Activated T-helper 1 cell treated with anti-CD3 and anti-CD28 coated beads, Interleukin-12 subunit alpha, Interleukin-12 subunit beta, Interleukin-2, Interleukin-4 antibody, amounts not matched to agents 30 ng/mL and 10 ng/mL and 1 ng/mL, durations not matched to agents 14 hours and 24 hours and 36 hours (primary cell): ENCODE measurements at regions of chr5 and their contacts with region 1.

Region 1: DNA sequence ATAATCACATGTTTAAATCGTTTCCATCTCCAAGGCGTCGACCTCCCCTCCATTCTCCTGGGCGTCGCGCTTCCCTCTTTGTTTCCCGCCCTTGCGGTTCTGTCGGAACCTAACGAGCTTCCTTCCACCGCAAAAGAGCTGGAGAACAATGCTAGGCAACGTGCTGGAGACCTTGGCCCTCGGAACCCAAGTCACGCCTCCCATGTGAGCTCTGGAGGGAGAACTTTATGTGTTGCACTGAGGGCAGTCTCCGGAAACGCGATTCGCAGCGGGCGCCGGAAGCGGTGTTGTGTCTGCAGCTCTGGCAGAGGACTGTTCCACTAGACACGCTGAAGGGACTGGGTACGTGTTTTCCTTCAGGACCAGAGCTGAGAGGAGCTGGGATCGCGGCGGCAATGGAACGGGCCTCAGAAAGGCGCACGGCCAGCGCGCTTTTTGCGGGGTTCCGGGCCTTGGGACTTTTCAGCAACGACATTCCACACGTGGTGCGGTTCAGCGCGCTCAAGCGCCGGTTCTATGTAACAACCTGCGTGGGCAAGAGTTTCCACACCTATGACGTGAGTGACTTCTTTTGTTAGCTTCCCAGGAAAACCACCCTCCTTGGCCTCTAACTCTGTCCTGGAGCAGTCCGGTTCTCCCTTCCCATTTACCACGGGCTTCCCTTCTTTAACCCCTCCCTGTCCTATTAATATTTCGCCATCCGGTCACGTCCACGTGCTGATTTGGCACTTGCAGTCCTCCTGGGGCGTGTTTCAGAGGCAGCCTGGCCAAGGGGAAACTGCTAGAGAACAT is at the start of gene WDR36:
- DNase-seq: peak; percentile 83
- H3K4me3 Mint-ChIP-seq: peak within 1 kb of the TSS; percentile 98
- H3K27ac Mint-ChIP-seq: peak within 1 kb of the TSS; percentile 97
- H3K4me1 Mint-ChIP-seq: peaks cover 42% of the 10 kb centered on the region
- H3K27me3 Mint-ChIP-seq: peaks cover 2% of the 10 kb centered on the region
- total RNA-seq, gene WDR36: 82.5 and 85.7 TPM in 2 replicates

Region 2: DNA sequence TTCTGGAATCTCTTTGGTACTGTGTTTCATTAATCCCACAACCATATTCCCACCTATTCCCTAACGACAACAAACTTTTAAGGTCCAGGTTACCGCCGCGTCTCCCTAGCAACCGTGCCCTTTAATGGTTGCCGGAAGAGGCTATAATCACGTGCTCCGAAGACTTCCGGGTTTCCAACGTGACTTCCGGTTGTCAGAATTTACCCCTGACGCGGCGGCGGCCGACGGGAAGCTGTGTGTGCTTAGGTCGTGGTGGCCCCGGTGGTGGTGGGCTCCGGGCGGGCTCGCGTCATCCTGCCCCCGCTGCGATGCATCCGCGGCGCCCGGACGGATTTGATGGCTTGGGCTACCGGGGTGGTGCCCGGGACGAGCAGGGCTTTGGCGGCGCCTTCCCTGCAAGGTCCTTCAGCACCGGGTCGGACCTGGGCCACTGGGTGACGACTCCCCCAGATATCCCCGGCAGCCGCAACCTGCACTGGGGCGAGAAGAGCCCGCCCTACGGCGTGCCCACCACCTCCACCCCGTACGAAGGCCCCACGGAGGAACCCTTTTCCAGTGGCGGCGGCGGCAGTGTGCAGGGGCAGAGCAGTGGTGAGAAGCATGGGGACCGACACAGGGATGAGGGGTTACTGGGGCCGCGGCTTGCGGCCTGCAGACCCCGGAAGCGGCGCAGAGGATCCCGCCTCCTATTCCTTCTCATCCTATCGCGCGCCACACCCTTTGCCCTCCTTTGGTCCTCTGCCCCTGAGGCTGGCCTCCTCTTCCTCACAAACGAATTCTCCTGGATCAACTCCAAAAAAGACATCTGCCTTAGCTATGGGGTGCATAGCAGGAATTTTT is 353.2 kb before region 1 on chr5 and contains the start of gene SLC25A46:
- intact Hi-C with region 1: loop called (anchors 1 kb)
- DNase-seq: peak; percentile 85
- H3K4me3 Mint-ChIP-seq: peak within 1 kb of the TSS; percentile 97
- H3K27ac Mint-ChIP-seq: peak within 1 kb of the TSS; percentile 96
- H3K4me1 Mint-ChIP-seq: peaks cover 39% of the 10 kb centered on the region
- H3K27me3 Mint-ChIP-seq: peaks cover 11% of the 10 kb centered on the region
- total RNA-seq, gene SLC25A46: 54.6 and 55.4 TPM in 2 replicates

Region 3: DNA sequence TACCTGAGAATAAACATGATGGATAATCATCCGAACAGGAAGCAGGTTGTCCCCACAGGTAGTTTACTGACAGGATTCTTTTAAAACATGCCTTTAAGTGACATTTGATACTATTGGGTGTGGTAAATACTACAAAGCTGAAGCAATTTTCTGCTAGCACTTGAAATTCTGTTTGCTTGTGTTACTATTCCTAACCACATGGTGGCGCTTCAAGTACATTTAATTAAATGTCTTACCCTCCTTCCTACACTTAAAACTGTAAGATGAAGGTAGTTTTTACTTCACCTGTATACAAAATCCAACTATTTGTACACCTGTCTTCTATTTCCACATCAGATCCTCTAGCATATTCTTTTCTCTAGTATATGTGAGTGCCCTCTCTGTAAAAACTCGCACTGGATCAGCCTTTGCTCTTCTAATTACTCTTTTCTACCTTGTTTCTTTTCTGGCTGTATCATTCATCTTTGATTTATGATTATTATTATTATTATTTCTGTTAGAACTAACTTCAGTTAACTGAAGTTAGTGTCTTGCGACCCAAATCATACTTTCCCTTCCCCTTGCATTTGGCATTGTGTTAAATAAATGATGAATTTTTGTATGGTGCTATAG is 335.0 kb before region 1 on chr5:
- intact Hi-C with region 1: loop called (anchors 1 kb)
- DNase-seq: peak; percentile 12
- H3K4me3 Mint-ChIP-seq: no peak overlapping the region
- H3K27ac Mint-ChIP-seq: no peak overlapping the region
- H3K4me1 Mint-ChIP-seq: peaks cover 31% of the 10 kb centered on the region
- H3K27me3 Mint-ChIP-seq: no peaks in the 10 kb centered on the region

Region 4: GRCh38 chr5:111061618-111062017 is 30.6 kb before region 1 on chr5:
- intact Hi-C with region 1: no loop called
- DNase-seq: no peak
- H3K4me3 Mint-ChIP-seq: no peak overlapping the region
- H3K27ac Mint-ChIP-seq: no peak overlapping the region
- H3K4me1 Mint-ChIP-seq: no peaks in the 10 kb centered on the region
- H3K27me3 Mint-ChIP-seq: peaks cover 41% of the 10 kb centered on the region

Region 5: DNA sequence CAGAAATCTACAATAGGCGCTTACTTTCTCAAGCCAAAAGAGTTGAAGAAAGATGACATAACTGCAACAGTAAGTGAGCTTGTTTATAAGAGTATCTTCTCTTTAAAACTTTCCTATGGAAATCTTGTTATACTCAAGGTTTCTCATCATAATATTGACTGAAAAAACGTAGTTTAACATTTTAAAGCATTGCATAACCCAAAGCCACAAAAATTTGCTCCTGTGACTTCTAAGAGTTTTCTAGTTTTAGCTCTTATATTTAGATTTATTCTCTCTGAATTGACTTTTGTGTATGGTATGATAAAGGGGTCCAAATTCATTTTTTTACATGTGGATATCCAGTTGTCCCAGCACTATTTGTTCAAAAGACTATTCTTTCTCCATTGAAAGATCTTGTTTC is 15.1 kb after region 1 on chr5:
- intact Hi-C with region 1: loop called (anchors 2 kb)
- DNase-seq: no peak
- H3K4me3 Mint-ChIP-seq: no peak overlapping the region
- H3K27ac Mint-ChIP-seq: no peak overlapping the region
- H3K4me1 Mint-ChIP-seq: no peaks in the 10 kb centered on the region
- H3K27me3 Mint-ChIP-seq: no peaks in the 10 kb centered on the region

Region 6: GRCh38 chr5:111223889-111224563 is 131.8 kb after region 1 on chr5 and contains the start of gene CAMK4:
- intact Hi-C with region 1: loop called (anchors 1 kb)
- DNase-seq: peak; percentile 70
- H3K4me3 Mint-ChIP-seq: peak within 1 kb of the TSS; percentile 98
- H3K27ac Mint-ChIP-seq: peak within 1 kb of the TSS; percentile 95
- H3K4me1 Mint-ChIP-seq: peaks cover 54% of the 10 kb centered on the region
- H3K27me3 Mint-ChIP-seq: peaks cover 2% of the 10 kb centered on the region
- total RNA-seq, gene CAMK4: 51.8 and 56.9 TPM in 2 replicates

Region 7: DNA sequence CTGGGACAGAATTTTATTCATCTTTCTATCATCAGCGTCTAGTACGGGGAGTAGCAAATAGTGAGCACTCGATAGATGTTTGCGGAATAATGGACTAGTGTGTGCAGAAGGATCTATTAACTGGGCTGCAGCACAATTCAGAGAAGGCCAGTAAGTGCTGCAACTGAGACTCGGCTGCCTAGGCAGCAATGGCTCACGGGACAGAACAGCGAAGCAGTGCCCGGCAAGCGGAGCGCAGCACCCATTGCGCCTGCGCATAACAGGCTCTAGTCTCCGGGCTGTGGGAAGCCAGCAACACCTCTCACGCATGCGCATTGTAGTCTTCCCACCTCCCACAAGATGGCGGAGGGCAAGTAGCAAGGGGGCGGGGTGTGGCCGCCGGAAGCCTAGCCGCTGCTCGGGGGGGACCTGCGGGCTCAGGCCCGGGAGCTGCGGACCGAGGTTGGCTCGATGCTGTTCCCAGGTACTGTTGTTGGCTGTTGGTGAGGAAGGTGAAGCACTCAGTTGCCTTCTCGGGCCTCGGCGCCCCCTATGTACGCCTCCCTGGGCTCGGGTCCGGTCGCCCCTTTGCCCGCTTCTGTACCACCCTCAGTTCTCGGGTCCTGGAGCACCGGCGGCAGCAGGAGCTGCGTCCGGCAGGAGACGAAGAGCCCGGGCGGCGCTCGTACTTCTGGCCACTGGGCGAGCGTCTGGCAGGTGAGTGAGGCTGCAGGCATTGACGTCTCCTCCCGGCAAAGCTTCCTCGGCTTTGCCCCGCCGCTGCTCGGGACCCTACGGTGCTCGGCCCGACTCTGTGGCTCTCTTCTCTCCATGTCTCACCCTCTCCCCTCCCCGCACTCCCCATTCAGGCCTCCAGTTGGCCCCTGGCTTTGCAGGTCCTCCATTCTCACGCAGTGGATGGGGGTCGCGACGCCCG is 1615.2 kb after region 1 on chr5:
- intact Hi-C with region 1: loop called (anchors 10 kb)
- DNase-seq: peak; percentile 96
- H3K4me3 Mint-ChIP-seq: peak overlapping the region; percentile 94
- H3K27ac Mint-ChIP-seq: peak overlapping the region; percentile 81
- H3K4me1 Mint-ChIP-seq: peaks cover 37% of the 10 kb centered on the region
- H3K27me3 Mint-ChIP-seq: peaks cover 8% of the 10 kb centered on the region